ENCODE measurements at regions of chr7 and their contacts with region 1.

Region 1: DNA sequence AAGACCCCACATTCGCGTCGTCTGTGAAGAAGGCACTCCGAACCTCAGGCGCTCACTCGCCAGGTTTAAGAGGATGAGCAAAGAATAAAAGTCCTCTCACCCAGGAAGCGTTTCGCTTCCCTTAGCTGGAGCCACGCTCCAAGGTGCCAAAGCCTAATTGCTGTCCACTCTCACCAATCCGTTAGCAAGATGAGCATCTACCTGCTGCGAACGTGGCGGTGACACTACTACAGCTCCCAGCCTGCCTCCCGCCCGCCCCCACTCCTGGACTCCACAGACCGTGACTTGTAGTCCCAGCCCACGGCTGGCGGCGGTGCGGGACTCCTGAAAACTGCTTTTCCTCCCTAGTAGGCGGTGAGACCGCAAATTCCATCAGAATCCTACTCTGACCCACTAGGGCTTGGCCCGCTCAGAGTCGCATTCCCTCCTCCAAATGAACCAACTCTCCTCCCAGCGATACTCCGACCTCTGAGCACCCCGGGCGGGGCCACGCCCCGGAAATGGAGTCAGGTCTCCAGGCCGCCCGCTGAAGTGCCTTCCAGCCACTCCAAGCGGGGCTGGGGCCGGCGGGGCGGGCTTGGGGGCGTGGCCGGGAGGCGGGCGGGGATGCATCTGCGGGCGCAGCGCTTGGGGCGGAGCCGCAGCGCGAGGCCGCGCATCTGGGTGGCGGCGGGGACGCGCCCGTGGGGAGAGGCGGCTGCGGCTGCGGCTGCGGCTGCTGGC is 521 bp upstream of the PTPN12 start:
- DNase-seq: peak; percentile 96
- H3K4me3 ChIP-seq: peak overlapping the region; percentile 21 to 64 (median 50)
- H3K27ac ChIP-seq: peak overlapping the region; percentile 33
- H3K4me1 ChIP-seq: peaks cover 21% of the 10 kb centered on the region
- H3K27me3 ChIP-seq: no peaks in the 10 kb centered on the region
- CTCF ChIP-seq: no peak
- POLR2A ChIP-seq: peak; percentile 92

Region 2: GRCh38 chr7:77235276-77235675 is 301.3 kb before region 1 on chr7:
- CTCF ChIA-PET with region 1: no interaction called
- POLR2A ChIA-PET with region 1: no interaction called
- dilution Hi-C with region 1: no loop called
- intact Hi-C with region 1: no loop called
- DNase-seq: no peak
- H3K4me3 ChIP-seq: no peak overlapping the region
- H3K27ac ChIP-seq: no peak overlapping the region
- H3K4me1 ChIP-seq: no peaks in the 10 kb centered on the region
- H3K27me3 ChIP-seq: no peaks in the 10 kb centered on the region
- CTCF ChIP-seq: no peak
- POLR2A ChIP-seq: no peak

Region 3: DNA sequence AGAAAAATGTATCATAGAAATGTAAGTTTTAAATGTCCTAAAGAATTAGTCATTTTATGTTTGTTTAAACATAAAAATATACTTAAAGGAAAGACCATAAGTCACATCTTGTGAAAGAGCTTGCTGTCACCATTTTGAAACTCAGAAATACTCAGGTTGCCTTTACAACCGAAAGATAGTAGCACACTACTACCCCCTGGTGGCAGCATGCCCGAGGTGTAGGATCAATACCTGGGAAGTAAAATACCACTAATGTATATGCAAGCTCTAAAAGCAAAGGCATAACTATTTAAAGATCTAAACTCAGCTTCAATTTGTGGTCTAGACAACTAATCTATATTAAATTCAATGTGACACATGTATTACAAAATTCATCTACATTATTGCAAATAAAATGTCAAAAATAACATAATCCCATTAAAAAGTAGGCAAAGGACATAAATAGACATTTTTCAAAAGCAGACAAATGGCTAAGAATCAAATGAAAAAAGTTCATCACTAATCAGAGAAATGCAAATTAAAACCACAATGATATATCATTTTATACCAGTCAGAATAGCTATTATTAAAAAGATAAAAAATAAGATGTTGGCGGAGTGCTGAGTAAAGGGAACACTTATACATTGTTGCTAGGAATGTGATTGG is 289.2 kb before region 1 on chr7:
- CTCF ChIA-PET with region 1: no interaction called
- POLR2A ChIA-PET with region 1: no interaction called
- dilution Hi-C with region 1: no loop called
- intact Hi-C with region 1: loop called (anchors 1 kb)
- DNase-seq: peak; percentile 80
- H3K4me3 ChIP-seq: no peak overlapping the region
- H3K27ac ChIP-seq: no peak overlapping the region
- H3K4me1 ChIP-seq: peaks cover 4% of the 10 kb centered on the region
- H3K27me3 ChIP-seq: no peaks in the 10 kb centered on the region
- CTCF ChIP-seq: peak; percentile 65 to 69
- POLR2A ChIP-seq: no peak

Region 4: GRCh38 chr7:77331938-77332695 is 204.5 kb before region 1 on chr7:
- CTCF ChIA-PET with region 1: no interaction called
- POLR2A ChIA-PET with region 1: interaction called, 3 read pairs
- dilution Hi-C with region 1: no loop called
- intact Hi-C with region 1: loop called (anchors 1 kb)
- DNase-seq: peak; percentile 93
- H3K4me3 ChIP-seq: no peak overlapping the region
- H3K27ac ChIP-seq: no peak overlapping the region
- H3K4me1 ChIP-seq: peaks cover 47% of the 10 kb centered on the region
- H3K27me3 ChIP-seq: no peaks in the 10 kb centered on the region
- CTCF ChIP-seq: peak; percentile 54 to 56
- POLR2A ChIP-seq: no peak

Region 5: DNA sequence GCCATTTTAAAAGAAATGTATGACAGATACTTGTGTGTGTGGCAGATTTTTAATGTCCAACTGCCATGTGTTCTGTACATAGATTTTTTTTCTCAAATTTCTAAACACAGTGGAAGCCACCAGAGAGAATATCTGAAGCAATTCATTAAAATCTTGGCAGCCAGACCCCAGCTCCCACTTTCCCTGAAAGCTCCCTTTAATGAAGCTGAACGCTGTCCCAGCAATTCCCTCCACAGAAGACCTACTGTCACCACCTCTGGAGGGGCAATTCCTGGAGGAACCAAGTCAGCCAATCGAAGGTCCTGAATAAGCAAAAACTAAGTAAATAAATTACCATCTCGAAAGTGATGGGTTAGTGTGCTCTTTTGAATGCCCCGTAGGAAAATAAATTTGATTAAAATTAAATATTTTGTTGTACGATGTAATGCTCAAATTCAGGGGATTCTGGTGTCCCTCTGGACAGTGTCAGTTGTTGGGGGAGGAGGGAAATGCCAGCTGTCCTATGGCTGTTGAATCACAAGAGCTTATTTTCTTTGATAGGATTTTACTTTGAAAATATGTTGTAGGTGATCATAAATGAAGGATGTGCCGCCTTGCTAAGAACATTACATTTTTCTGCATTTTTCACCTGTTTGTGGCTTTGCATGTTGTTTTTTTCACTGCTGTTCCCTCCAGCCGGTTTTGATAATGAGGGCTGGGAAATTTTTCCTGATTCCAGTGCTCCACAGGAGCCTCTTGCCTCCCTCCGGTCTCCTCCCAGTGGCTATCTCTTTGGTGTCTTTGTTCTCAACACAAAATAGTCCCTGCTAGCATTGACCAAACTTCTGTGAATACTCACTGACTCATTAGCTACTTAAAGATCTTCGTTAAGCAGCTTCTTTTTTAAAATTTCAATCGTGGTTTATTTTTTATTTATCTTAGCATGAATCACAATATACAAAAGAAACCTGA is 111.2 kb before region 1 on chr7:
- CTCF ChIA-PET with region 1: no interaction called
- POLR2A ChIA-PET with region 1: no interaction called
- dilution Hi-C with region 1: no loop called
- intact Hi-C with region 1: loop called (anchors 5 kb)
- DNase-seq: no peak
- H3K4me3 ChIP-seq: no peak overlapping the region
- H3K27ac ChIP-seq: no peak overlapping the region
- H3K4me1 ChIP-seq: peaks cover 21% of the 10 kb centered on the region
- H3K27me3 ChIP-seq: no peaks in the 10 kb centered on the region
- CTCF ChIP-seq: no peak
- POLR2A ChIP-seq: no peak

Region 6: DNA sequence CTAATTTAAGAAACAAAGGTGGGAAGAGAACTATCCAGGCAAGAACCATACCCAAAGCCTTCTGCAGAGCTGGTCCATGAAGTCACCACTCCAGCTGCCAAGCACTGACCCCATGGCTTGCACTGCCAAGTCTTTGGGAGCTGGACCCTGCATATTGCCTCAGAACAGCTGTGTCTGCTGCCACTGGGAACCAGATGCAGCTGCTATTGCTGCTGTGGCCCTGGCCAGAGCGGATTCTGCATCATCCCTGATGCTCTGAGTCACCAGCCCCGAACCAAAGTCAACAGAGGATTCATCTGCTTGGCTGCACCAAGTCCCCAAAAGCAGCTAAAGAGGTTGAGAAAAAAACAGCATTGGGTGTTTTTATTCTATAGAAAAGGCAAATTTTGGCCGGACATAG is 81.2 kb before region 1 on chr7:
- CTCF ChIA-PET with region 1: no interaction called
- POLR2A ChIA-PET with region 1: no interaction called
- dilution Hi-C with region 1: no loop called
- intact Hi-C with region 1: loop called (anchors 1 kb)
- DNase-seq: peak; percentile 60
- H3K4me3 ChIP-seq: no peak overlapping the region
- H3K27ac ChIP-seq: no peak overlapping the region
- H3K4me1 ChIP-seq: peaks cover 28% of the 10 kb centered on the region
- H3K27me3 ChIP-seq: no peaks in the 10 kb centered on the region
- CTCF ChIP-seq: no peak
- POLR2A ChIP-seq: no peak

Region 7: DNA sequence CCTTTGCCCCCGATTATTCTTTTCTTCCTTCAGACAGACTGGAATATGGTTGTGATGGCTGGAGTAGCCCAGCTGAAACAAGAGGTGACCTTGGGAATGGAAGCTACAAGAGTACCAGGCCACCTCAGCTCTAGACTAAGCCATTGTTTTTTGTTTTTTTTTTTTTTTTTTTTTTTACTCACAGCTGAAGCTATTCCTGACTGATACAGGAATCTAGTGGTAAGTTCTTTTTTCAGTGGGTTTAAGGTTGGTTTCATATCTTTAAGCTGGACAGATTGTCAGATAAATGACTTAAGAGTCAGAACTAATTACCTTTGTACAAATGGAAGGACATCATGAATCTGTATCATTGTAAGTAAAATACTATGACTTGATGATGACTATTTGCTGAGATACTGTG is 29.7 kb before region 1 on chr7:
- CTCF ChIA-PET with region 1: no interaction called
- POLR2A ChIA-PET with region 1: no interaction called
- dilution Hi-C with region 1: no loop called
- intact Hi-C with region 1: no loop called
- DNase-seq: no peak
- H3K4me3 ChIP-seq: no peak overlapping the region
- H3K27ac ChIP-seq: no peak overlapping the region
- H3K4me1 ChIP-seq: no peaks in the 10 kb centered on the region
- H3K27me3 ChIP-seq: no peaks in the 10 kb centered on the region
- CTCF ChIP-seq: no peak
- POLR2A ChIP-seq: no peak

Region 8: DNA sequence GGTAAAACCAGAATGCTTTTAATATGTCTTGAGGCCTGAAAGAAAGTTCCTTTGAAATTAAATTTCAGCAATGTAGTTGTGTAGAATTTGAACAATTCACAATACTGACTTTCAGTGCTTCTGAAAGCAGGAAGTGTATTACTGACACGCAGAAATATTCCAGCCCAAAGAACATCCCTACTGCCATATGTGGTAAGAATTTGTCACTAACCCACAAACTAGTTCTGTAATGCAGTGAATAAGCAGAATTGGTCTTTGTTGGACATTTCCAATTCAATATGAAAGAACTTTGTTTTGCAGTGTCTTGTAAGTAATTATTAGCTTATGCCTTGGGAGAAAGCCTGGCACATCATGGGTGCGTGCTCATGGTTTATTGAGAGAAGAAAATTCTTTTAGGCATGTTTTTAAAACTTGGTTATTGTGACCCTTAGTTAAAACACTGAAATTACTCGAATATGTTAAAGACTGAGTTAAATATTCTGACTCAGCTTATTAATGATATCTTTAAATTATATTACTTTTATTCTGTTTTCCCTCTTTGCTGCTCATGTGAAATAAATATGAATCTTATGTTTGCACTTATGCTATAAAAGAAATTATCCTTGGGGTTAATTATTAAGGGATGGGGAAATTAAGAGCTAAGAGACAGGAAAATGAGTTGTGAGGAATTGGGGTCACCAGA is 33.9 kb after region 1 on chr7:
- CTCF ChIA-PET with region 1: no interaction called
- POLR2A ChIA-PET with region 1: interaction called, 4 read pairs
- dilution Hi-C with region 1: no loop called
- intact Hi-C with region 1: loop called (anchors 2 kb)
- DNase-seq: peak; percentile 48
- H3K4me3 ChIP-seq: no peak overlapping the region
- H3K27ac ChIP-seq: peak overlapping the region; percentile 24
- H3K4me1 ChIP-seq: peaks cover 21% of the 10 kb centered on the region
- H3K27me3 ChIP-seq: no peaks in the 10 kb centered on the region
- CTCF ChIP-seq: no peak
- POLR2A ChIP-seq: no peak

Region 9: GRCh38 chr7:77696198-77697028 is 159.8 kb after region 1 on chr7 and contains the start of gene RSBN1L:
- CTCF ChIA-PET with region 1: no interaction called
- POLR2A ChIA-PET with region 1: no interaction called
- dilution Hi-C with region 1: no loop called
- intact Hi-C with region 1: loop called (anchors 5 kb)
- DNase-seq: peak; percentile 99
- H3K4me3 ChIP-seq: peak within 1 kb of the TSS; percentile 90 to 97 (median 91)
- H3K27ac ChIP-seq: peak within 1 kb of the TSS; percentile 62
- H3K4me1 ChIP-seq: peaks cover 23% of the 10 kb centered on the region
- H3K27me3 ChIP-seq: no peaks in the 10 kb centered on the region
- CTCF ChIP-seq: peak; percentile 11 to 34
- POLR2A ChIP-seq: peak; percentile 88
- total RNA-seq, gene RSBN1L: 13.1 and 13.3 TPM in 2 replicates

Region 10: GRCh38 chr7:77771901-77772300 is 235.3 kb after region 1 on chr7:
- CTCF ChIA-PET with region 1: no interaction called
- POLR2A ChIA-PET with region 1: no interaction called
- dilution Hi-C with region 1: no loop called
- intact Hi-C with region 1: no loop called
- DNase-seq: no peak
- H3K4me3 ChIP-seq: no peak overlapping the region
- H3K27ac ChIP-seq: no peak overlapping the region
- H3K4me1 ChIP-seq: no peaks in the 10 kb centered on the region
- H3K27me3 ChIP-seq: no peaks in the 10 kb centered on the region
- CTCF ChIP-seq: no peak
- POLR2A ChIP-seq: no peak